ENCODE measurements at regions of chr2 and their contacts with region 1.

Region 1: GRCh38 chr2:165621086-165621560 is 151.6 kb downstream of the CSRNP3 start:
- DNase-seq: peak; percentile 95
- H3K4me3 ChIP-seq: peak overlapping the region in 1 of 3 experiments; percentile 27
- H3K27ac ChIP-seq: peak overlapping the region; percentile 32
- H3K4me1 ChIP-seq: peaks cover 15% of the 10 kb centered on the region
- H3K27me3 ChIP-seq: peaks cover 2 to 9% of the 10 kb centered on the region in 2 experiments
- CTCF ChIP-seq: no peak
- POLR2A ChIP-seq: no peak

Region 2: GRCh38 chr2:165376571-165376975 is 244.6 kb before region 1 on chr2:
- CTCF ChIA-PET with region 1: no interaction called
- POLR2A ChIA-PET with region 1: no interaction called
- dilution Hi-C with region 1: no loop called
- intact Hi-C with region 1: loop called (anchors 2 kb)
- DNase-seq: peak; percentile 74
- H3K4me3 ChIP-seq: no peak overlapping the region
- H3K27ac ChIP-seq: peak overlapping the region; percentile 28
- H3K4me1 ChIP-seq: peaks cover 7% of the 10 kb centered on the region
- H3K27me3 ChIP-seq: peaks cover 0 to 4% of the 10 kb centered on the region in 2 experiments
- CTCF ChIP-seq: no peak
- POLR2A ChIP-seq: no peak

Region 3: GRCh38 chr2:165610591-165611029 is 10.5 kb before region 1 on chr2:
- CTCF ChIA-PET with region 1: no interaction called
- POLR2A ChIA-PET with region 1: no interaction called
- dilution Hi-C with region 1: no loop called
- intact Hi-C with region 1: loop called (anchors 1 kb)
- DNase-seq: peak; percentile 50
- H3K4me3 ChIP-seq: no peak overlapping the region
- H3K27ac ChIP-seq: no peak overlapping the region
- H3K4me1 ChIP-seq: peaks cover 12% of the 10 kb centered on the region
- H3K27me3 ChIP-seq: peaks cover 0 to 3% of the 10 kb centered on the region in 2 experiments
- CTCF ChIP-seq: no peak
- POLR2A ChIP-seq: no peak

Measured in endothelial cell of umbilical vein (primary cell).